Activated CD4-positive, alpha-beta T cell treated with anti-CD3 and anti-CD28 coated beads, Interleukin-2, amount 10 ng/mL, durations not matched to agents 7 days and 5 days (primary cell): ENCODE measurements at regions of chr1 and their contacts with region 1.

Region 1: DNA sequence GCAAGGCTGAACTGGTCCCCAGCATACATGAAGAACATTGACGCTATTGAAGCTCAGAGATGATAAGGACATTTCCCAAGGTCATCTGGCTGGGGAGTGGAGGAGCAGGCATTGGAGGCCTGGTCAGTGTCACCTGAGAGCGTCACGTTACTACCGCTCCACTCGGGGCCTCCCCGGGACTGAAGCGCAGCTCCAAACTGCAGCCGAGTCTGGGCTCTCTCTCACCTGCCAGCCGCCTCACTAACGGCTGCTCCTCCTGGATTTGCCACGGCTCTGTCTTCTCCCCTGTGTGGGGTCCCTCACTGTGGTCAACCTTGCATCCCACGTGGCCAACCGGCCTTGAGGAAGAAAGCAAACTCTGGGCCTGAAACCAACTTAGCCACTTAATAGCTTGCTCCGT is 111.3 kb downstream of the ADSS2 start:
- DNase-seq: no peak
- H3K4me3 Mint-ChIP-seq: no peak overlapping the region
- H3K27ac Mint-ChIP-seq: no peak overlapping the region
- H3K4me1 Mint-ChIP-seq: peaks cover 29% of the 10 kb centered on the region
- H3K27me3 Mint-ChIP-seq: no peaks in the 10 kb centered on the region

Region 2: DNA sequence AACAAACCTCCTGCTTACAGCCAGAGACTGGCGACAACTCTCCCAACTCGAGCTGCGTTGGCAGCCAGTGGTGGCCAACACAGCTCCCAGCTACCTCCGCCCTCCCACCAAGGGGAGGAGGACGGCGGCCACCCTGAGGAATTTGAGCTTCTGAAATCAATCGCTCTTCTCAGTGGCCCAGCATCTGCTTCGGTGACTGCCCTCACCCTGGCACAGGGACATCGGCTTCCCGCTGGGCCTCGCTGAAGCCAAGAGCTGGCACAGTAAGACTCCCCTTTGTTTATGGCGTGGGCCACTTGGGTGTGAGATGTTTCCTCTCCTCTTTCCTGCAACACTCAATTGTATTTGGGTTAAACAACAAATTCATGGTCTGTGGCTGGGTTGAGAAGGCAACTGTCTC is 153.1 kb before region 1 on chr1:
- CTCF ChIA-PET with region 1: no interaction called
- POLR2A ChIA-PET with region 1: no interaction called
- DNase-seq: no peak
- H3K4me3 Mint-ChIP-seq: no peak overlapping the region
- H3K27ac Mint-ChIP-seq: no peak overlapping the region
- H3K4me1 Mint-ChIP-seq: no peaks in the 10 kb centered on the region
- H3K27me3 Mint-ChIP-seq: no peaks in the 10 kb centered on the region

Region 3: GRCh38 chr1:244325056-244325764 is 15.2 kb before region 1 on chr1:
- CTCF ChIA-PET with region 1: interaction called, 6 read pairs
- POLR2A ChIA-PET with region 1: interaction called, 18 read pairs
- DNase-seq: peak; percentile 53
- H3K4me3 Mint-ChIP-seq: peak overlapping the region; percentile 80
- H3K27ac Mint-ChIP-seq: peak overlapping the region; percentile 95
- H3K4me1 Mint-ChIP-seq: peaks cover 60% of the 10 kb centered on the region
- H3K27me3 Mint-ChIP-seq: peaks cover 6% of the 10 kb centered on the region